ENCODE measurements at regions of chr6 and their contacts with region 1.

Region 1: DNA sequence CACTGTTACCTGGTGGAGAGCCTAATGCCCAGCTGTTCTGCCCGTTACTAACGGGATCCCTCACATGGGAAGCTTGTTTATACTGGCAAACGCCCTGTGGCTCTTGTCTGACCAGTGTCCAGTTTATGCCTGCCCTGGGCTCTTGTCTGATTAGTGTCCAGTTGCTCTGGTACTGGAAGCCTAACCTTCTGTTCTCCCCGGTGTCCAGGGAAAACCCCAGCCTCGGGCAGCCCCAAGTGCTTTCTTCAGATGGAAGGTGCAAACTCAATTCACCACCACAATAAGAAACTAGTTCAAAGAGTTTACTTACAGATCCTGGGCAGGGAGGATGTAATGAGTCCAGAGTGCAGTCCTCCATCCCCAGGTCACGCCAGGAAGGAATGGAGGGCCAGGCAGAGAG is 148.4 kb downstream of the TBXT start:
- DNase-seq: no peak
- ATAC-seq: no peak
- H3K4me3 ChIP-seq: no peak overlapping the region
- H3K27ac ChIP-seq: no peak overlapping the region
- H3K4me1 ChIP-seq: peaks cover under 1% of the 10 kb centered on the region; the same call in 1 of the 2 replicates
- H3K27me3 ChIP-seq: no peaks in the 10 kb centered on the region
- CTCF ChIP-seq: no peak
- POLR2A ChIP-seq: no peak
- RAD21 ChIP-seq: no peak

Region 2: GRCh38 chr6:166058064-166058739 is 39.0 kb after region 1 on chr6:
- CTCF ChIA-PET with region 1: no interaction called
- POLR2A ChIA-PET with region 1: no interaction called
- dilution Hi-C with region 1: no loop called
- in situ Hi-C with region 1: no loop called
- intact Hi-C with region 1: loop called (anchors 5 kb)
- DNase-seq: peak; percentile 69
- ATAC-seq: peak; percentile 71
- H3K4me3 ChIP-seq: no peak overlapping the region
- H3K27ac ChIP-seq: no peak overlapping the region
- H3K4me1 ChIP-seq: no peaks in the 10 kb centered on the region; the same call in 1 of the 2 replicates
- H3K27me3 ChIP-seq: peaks cover 3% of the 10 kb centered on the region; the same call in 1 of the 2 replicates
- CTCF ChIP-seq: no peak
- POLR2A ChIP-seq: no peak
- RAD21 ChIP-seq: no peak

Measured in IMR-90 (cell line).